IMR-90 (cell line): ENCODE measurements at regions of chr17 and their contacts with region 1.

Region 1: GRCh38 chr17:57671667-57672632 is 73.1 kb downstream of the CCDC182 start:
- DNase-seq: peak; percentile 69
- ATAC-seq: peak; percentile 99
- H3K4me3 ChIP-seq: no peak overlapping the region
- H3K27ac ChIP-seq: no peak overlapping the region
- H3K4me1 ChIP-seq: peaks cover 12% of the 10 kb centered on the region
- H3K27me3 ChIP-seq: no peaks in the 10 kb centered on the region
- CTCF ChIP-seq: peak; percentile 89
- POLR2A ChIP-seq: 0 out of 2 replicates have a peak, but pooled peaks have one; percentile 25
- RAD21 ChIP-seq: peak; percentile 93

Region 2: GRCh38 chr17:57597531-57598453 is 74.2 kb before region 1 on chr17:
- CTCF ChIA-PET with region 1: interaction called, 17 read pairs
- POLR2A ChIA-PET with region 1: no interaction called
- dilution Hi-C with region 1: no loop called
- in situ Hi-C with region 1: no loop called
- intact Hi-C with region 1: loop called (anchors 1 kb)
- DNase-seq: peak; percentile 82
- ATAC-seq: peak; percentile 88
- H3K4me3 ChIP-seq: no peak overlapping the region
- H3K27ac ChIP-seq: no peak overlapping the region
- H3K4me1 ChIP-seq: peaks cover 4% of the 10 kb centered on the region
- H3K27me3 ChIP-seq: no peaks in the 10 kb centered on the region
- CTCF ChIP-seq: peak; percentile 85
- POLR2A ChIP-seq: no peak
- RAD21 ChIP-seq: peak; percentile 85